B cell (primary cell): ENCODE measurements at regions of chr11 and their contacts with region 1.

Region 1: GRCh38 chr11:111878849-111879636 is at the starts of genes CFAP68 and FDXACB1:
- DNase-seq: peak; percentile 99
- ATAC-seq: peak; percentile 90
- H3K4me3 ChIP-seq: peak within 1 kb of the TSS; percentile 58 to 93 (median 75)
- H3K4me3 Mint-ChIP-seq: peak within 1 kb of the TSS; percentile 94
- H3K27ac ChIP-seq: peak within 1 kb of the TSS; percentile 88 to 97
- H3K27ac Mint-ChIP-seq: peak within 1 kb of the TSS; percentile 98
- H3K4me1 ChIP-seq: peaks cover 12 to 14% of the 10 kb centered on the region in 2 donors
- H3K4me1 Mint-ChIP-seq: peaks cover 16% of the 10 kb centered on the region
- H3K27me3 ChIP-seq: no peaks in the 10 kb centered on the region
- H3K27me3 Mint-ChIP-seq: no peaks in the 10 kb centered on the region
- CTCF ChIP-seq: peak; percentile 99
- total RNA-seq, gene CFAP68: 7.8 and 8.2 TPM in 2 replicates
- total RNA-seq, gene FDXACB1: 3.1 and 4.2 TPM in 2 replicates

Region 2: GRCh38 chr11:111766093-111766833 is 112.8 kb before region 1 on chr11 and contains the start of gene PPP2R1B:
- CTCF ChIA-PET with region 1: no interaction called
- POLR2A ChIA-PET with region 1: no interaction called
- intact Hi-C with region 1: loop called (anchors 1 kb)
- DNase-seq: peak; percentile 88
- ATAC-seq: peak; percentile 97
- H3K4me3 ChIP-seq: peak within 1 kb of the TSS; percentile 74 to 97 (median 90)
- H3K4me3 Mint-ChIP-seq: peak within 1 kb of the TSS; percentile 100
- H3K27ac ChIP-seq: peak within 1 kb of the TSS; percentile 53 to 77
- H3K27ac Mint-ChIP-seq: peak within 1 kb of the TSS; percentile 97
- H3K4me1 ChIP-seq: peaks cover 9 to 16% of the 10 kb centered on the region in 2 donors
- H3K4me1 Mint-ChIP-seq: peaks cover 37% of the 10 kb centered on the region
- H3K27me3 ChIP-seq: no peaks in the 10 kb centered on the region
- H3K27me3 Mint-ChIP-seq: no peaks in the 10 kb centered on the region
- CTCF ChIP-seq: no peak
- total RNA-seq, gene PPP2R1B: 35.6 and 37.0 TPM in 2 replicates

Region 3: DNA sequence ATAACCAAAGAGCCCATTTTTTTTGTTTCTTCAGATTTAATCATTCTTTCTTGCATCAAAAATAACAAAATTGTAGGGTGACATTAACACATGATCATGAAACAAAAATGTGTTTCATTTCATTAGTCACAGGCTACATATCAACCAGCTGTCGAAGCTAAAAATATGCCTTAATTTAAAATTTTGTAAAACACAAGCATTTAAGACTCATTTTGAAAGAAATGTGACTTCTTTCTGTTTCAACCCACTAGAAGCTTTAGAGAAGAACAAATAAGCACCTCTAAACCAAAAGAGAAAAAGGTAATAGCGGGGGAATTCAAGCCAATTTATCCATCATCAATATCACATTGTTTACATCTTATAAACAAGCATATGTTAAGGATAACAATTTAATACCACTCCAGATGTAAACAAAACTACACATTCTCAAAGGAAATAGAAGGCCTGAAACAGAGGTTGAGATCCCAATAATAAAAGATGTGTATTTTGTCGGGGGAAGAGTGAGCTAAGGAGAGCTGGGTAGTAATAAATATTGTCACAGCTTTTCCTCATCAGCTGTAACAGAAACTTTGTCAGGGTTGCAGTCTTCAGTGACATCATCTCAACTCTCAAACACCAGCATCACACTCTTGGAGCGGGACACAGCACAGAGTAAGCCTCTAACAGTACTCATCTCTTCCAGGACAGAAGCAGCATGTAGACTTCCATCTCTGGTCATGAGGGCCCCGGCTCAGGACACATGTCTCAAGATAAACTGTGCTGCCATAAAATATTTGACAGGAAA is 49.7 kb before region 1 on chr11:
- CTCF ChIA-PET with region 1: no interaction called
- POLR2A ChIA-PET with region 1: no interaction called
- intact Hi-C with region 1: no loop called
- DNase-seq: no peak
- ATAC-seq: no peak
- H3K4me3 ChIP-seq: no peak overlapping the region
- H3K4me3 Mint-ChIP-seq: no peak overlapping the region
- H3K27ac ChIP-seq: no peak overlapping the region
- H3K27ac Mint-ChIP-seq: no peak overlapping the region
- H3K4me1 ChIP-seq: no peaks in the 10 kb centered on the region
- H3K4me1 Mint-ChIP-seq: no peaks in the 10 kb centered on the region
- H3K27me3 ChIP-seq: no peaks in the 10 kb centered on the region
- H3K27me3 Mint-ChIP-seq: no peaks in the 10 kb centered on the region
- CTCF ChIP-seq: no peak

Region 4: GRCh38 chr11:111926505-111927391 is 47.7 kb after region 1 on chr11:
- CTCF ChIA-PET with region 1: interaction called, 6 read pairs
- POLR2A ChIA-PET with region 1: interaction called, 10 read pairs
- intact Hi-C with region 1: loop called (anchors 1 kb)
- DNase-seq: peak; percentile 96
- ATAC-seq: peak; percentile 90
- H3K4me3 ChIP-seq: peak overlapping the region; percentile 51 to 82 (median 66)
- H3K4me3 Mint-ChIP-seq: peak overlapping the region; percentile 92
- H3K27ac ChIP-seq: peak overlapping the region; percentile 67 to 89
- H3K27ac Mint-ChIP-seq: peak overlapping the region; percentile 93
- H3K4me1 ChIP-seq: peaks cover 9 to 17% of the 10 kb centered on the region in 2 donors
- H3K4me1 Mint-ChIP-seq: peaks cover 16% of the 10 kb centered on the region
- H3K27me3 ChIP-seq: peaks cover 0 to 4% (median 0%) of the 10 kb centered on the region in 4 experiments
- H3K27me3 Mint-ChIP-seq: peaks cover 9% of the 10 kb centered on the region
- CTCF ChIP-seq: no peak

Region 5: GRCh38 chr11:112024773-112025678 is 146.0 kb after region 1 on chr11 and contains the start of gene DLAT:
- CTCF ChIA-PET with region 1: no interaction called
- POLR2A ChIA-PET with region 1: no interaction called
- intact Hi-C with region 1: loop called (anchors 2 kb)
- DNase-seq: peak; percentile 90
- ATAC-seq: peak; percentile 83
- H3K4me3 ChIP-seq: peak within 1 kb of the TSS; percentile 76 to 100 (median 98)
- H3K4me3 Mint-ChIP-seq: peak within 1 kb of the TSS; percentile 100
- H3K27ac ChIP-seq: peak within 1 kb of the TSS; percentile 75 to 83
- H3K27ac Mint-ChIP-seq: peak within 1 kb of the TSS; percentile 98
- H3K4me1 ChIP-seq: peaks cover 18 to 20% of the 10 kb centered on the region in 2 donors
- H3K4me1 Mint-ChIP-seq: peaks cover 29% of the 10 kb centered on the region
- H3K27me3 ChIP-seq: no peaks in the 10 kb centered on the region
- H3K27me3 Mint-ChIP-seq: no peaks in the 10 kb centered on the region
- CTCF ChIP-seq: no peak
- total RNA-seq, gene DLAT: 19.8 and 21.1 TPM in 2 replicates

Region 6: DNA sequence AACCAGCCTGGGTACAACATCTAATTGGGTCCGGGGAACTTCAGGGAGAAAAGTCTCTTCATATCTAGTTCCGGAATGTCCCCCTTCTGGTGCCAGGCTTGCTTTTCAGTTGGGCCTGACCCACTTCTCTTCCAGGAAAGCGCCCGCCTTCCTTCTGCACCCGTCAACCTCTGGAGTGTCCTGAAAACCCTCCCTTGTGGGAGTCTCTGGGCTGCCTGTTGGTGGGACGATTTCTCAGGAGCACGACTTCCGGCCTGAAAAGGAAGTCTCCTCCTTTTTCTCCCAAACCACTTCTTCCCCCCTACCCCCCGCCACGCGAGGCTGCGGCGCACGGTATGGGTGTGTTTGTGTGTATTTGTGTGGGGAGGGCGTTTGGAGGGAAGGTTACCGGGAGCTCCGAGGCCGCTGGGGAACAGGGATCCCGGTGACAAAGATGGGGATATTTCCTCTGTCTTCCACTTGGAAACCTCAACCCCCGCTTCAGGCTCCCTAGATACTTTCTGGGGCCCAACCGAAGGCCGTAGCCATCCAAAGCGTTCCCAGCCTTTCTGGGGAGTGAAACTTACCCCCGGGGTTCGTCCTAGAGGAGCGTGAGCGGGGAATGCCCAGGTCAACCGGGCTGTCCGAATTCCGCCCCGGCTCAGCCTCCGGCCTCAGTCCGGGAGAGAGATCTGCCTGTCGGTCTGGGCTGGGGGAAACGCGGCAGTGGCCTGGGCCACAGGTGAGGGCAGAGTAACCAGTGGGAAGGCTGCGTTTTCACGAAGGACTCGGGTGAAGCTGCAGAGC is 195.2 kb after region 1 on chr11 and contains the start of gene NKAPD1:
- CTCF ChIA-PET with region 1: no interaction called
- POLR2A ChIA-PET with region 1: no interaction called
- intact Hi-C with region 1: loop called (anchors 2 kb)
- DNase-seq: peak; percentile 95
- ATAC-seq: peak; percentile 85
- H3K4me3 ChIP-seq: peak within 1 kb of the TSS; percentile 78 to 98 (median 81)
- H3K4me3 Mint-ChIP-seq: peak within 1 kb of the TSS; percentile 97
- H3K27ac ChIP-seq: peak within 1 kb of the TSS; percentile 53 to 88
- H3K27ac Mint-ChIP-seq: peak within 1 kb of the TSS; percentile 97
- H3K4me1 ChIP-seq: peaks cover 12 to 13% of the 10 kb centered on the region in 2 donors
- H3K4me1 Mint-ChIP-seq: peaks cover 31% of the 10 kb centered on the region
- H3K27me3 ChIP-seq: no peaks in the 10 kb centered on the region
- H3K27me3 Mint-ChIP-seq: peaks cover 3% of the 10 kb centered on the region
- CTCF ChIP-seq: peak; percentile 23
- total RNA-seq, gene NKAPD1: 22.8 and 23.4 TPM in 2 replicates

Region 7: GRCh38 chr11:112226062-112226830 is 347.2 kb after region 1 on chr11 and contains the start of gene PTS:
- CTCF ChIA-PET with region 1: no interaction called
- POLR2A ChIA-PET with region 1: no interaction called
- intact Hi-C with region 1: loop called (anchors 1 kb)
- DNase-seq: peak; percentile 94
- ATAC-seq: peak; percentile 90
- H3K4me3 ChIP-seq: peak within 1 kb of the TSS; percentile 82 to 98 (median 92)
- H3K4me3 Mint-ChIP-seq: peak within 1 kb of the TSS; percentile 95
- H3K27ac ChIP-seq: peak within 1 kb of the TSS; percentile 99
- H3K27ac Mint-ChIP-seq: peak within 1 kb of the TSS; percentile 99
- H3K4me1 ChIP-seq: peaks cover 10 to 18% of the 10 kb centered on the region in 2 donors
- H3K4me1 Mint-ChIP-seq: peaks cover 23% of the 10 kb centered on the region
- H3K27me3 ChIP-seq: no peaks in the 10 kb centered on the region
- H3K27me3 Mint-ChIP-seq: no peaks in the 10 kb centered on the region
- CTCF ChIP-seq: no peak
- total RNA-seq, gene PTS: 36.2 and 36.7 TPM in 2 replicates

Region 8: GRCh38 chr11:113314389-113315301 is 1435.6 kb after region 1 on chr11 and contains the start of gene TTC12:
- CTCF ChIA-PET with region 1: no interaction called
- POLR2A ChIA-PET with region 1: no interaction called
- intact Hi-C with region 1: loop called (anchors 5 kb)
- DNase-seq: peak; percentile 94
- ATAC-seq: peak; percentile 99
- H3K4me3 ChIP-seq: peak within 1 kb of the TSS; percentile 53 to 89 (median 67)
- H3K4me3 Mint-ChIP-seq: peak within 1 kb of the TSS; percentile 82
- H3K27ac ChIP-seq: peak within 1 kb of the TSS; percentile 80 to 94
- H3K27ac Mint-ChIP-seq: peak within 1 kb of the TSS; percentile 87
- H3K4me1 ChIP-seq: peaks cover 15 to 20% of the 10 kb centered on the region in 2 donors
- H3K4me1 Mint-ChIP-seq: peaks cover 24% of the 10 kb centered on the region
- H3K27me3 ChIP-seq: no peaks in the 10 kb centered on the region
- H3K27me3 Mint-ChIP-seq: no peaks in the 10 kb centered on the region
- CTCF ChIP-seq: no peak
- total RNA-seq, gene TTC12: 47.3 and 63.8 TPM in 2 replicates